Activated T-helper 1 cell treated with anti-CD3 and anti-CD28 coated beads, Interleukin-12 subunit alpha, Interleukin-12 subunit beta, Interleukin-2, Interleukin-4 antibody, amounts not matched to agents 30 ng/mL and 10 ng/mL and 1 ng/mL, durations not matched to agents 14 hours and 24 hours and 36 hours (primary cell): ENCODE measurements at regions of chr12 and their contacts with region 1.

Region 1: GRCh38 chr12:56117778-56118687 is at the start of gene ZC3H10:
- DNase-seq: peak; percentile 98
- H3K4me3 Mint-ChIP-seq: peak within 1 kb of the TSS; percentile 91
- H3K27ac Mint-ChIP-seq: peak within 1 kb of the TSS; percentile 99
- H3K4me1 Mint-ChIP-seq: peaks cover 31% of the 10 kb centered on the region
- H3K27me3 Mint-ChIP-seq: no peaks in the 10 kb centered on the region
- total RNA-seq, gene ZC3H10: 13.5 and 13.7 TPM in 2 replicates

Region 2: GRCh38 chr12:54984658-54985376 is 1133.2 kb before region 1 on chr12 and contains the start of gene TESPA1:
- intact Hi-C with region 1: loop called (anchors 5 kb)
- DNase-seq: peak; percentile 82
- H3K4me3 Mint-ChIP-seq: peak within 1 kb of the TSS; percentile 90
- H3K27ac Mint-ChIP-seq: peak within 1 kb of the TSS; percentile 90
- H3K4me1 Mint-ChIP-seq: peaks cover 79% of the 10 kb centered on the region
- H3K27me3 Mint-ChIP-seq: no peaks in the 10 kb centered on the region
- total RNA-seq, gene TESPA1: 179 and 181 TPM in 2 replicates

Region 3: DNA sequence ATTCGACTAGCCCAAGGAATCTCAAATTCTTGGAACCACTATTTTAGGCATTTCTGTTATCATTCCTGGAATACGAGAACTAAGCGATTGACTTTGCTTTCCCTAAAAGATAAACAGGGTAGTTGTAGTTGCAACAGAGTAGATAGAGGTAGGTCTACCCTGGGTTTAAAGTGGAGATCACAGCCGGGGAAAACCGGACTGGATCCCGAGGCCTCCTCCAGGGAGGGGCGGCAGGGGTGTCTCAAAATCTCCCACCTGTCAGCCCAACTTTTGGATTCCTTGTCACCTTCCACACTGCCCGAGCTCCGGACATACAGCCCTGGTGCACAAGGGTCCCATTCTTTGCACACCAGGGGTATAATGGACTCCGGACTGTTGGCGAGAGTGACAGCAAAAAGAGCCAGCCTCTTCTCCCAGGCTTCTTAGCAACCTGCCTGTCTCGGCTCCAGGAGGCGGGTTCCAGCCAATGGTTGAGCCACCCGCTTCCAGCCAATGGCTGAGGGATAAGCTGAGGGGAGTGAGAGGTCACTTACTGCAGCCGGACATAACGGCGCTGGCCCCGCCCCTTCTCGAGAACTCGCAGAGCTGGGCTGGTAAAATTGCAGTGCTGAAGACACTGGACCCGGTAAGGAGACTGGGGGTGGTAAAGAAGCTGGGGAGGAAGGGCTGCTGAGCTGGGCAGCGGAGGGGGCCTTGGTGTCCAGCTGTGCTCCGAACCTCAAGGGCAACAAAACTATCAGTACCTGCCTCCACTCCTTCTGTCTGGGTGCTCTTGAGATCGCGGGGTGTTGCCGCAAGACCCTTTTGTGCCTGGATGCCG is 121.1 kb before region 1 on chr12 and contains the start of gene SUOX:
- intact Hi-C with region 1: loop called (anchors 1 kb)
- DNase-seq: peak; percentile 50
- H3K4me3 Mint-ChIP-seq: peak within 1 kb of the TSS; percentile 88
- H3K27ac Mint-ChIP-seq: peak within 1 kb of the TSS; percentile 64
- H3K4me1 Mint-ChIP-seq: peaks cover 30% of the 10 kb centered on the region
- H3K27me3 Mint-ChIP-seq: no peaks in the 10 kb centered on the region
- total RNA-seq, gene SUOX: 12.0 and 12.9 TPM in 2 replicates

Region 4: DNA sequence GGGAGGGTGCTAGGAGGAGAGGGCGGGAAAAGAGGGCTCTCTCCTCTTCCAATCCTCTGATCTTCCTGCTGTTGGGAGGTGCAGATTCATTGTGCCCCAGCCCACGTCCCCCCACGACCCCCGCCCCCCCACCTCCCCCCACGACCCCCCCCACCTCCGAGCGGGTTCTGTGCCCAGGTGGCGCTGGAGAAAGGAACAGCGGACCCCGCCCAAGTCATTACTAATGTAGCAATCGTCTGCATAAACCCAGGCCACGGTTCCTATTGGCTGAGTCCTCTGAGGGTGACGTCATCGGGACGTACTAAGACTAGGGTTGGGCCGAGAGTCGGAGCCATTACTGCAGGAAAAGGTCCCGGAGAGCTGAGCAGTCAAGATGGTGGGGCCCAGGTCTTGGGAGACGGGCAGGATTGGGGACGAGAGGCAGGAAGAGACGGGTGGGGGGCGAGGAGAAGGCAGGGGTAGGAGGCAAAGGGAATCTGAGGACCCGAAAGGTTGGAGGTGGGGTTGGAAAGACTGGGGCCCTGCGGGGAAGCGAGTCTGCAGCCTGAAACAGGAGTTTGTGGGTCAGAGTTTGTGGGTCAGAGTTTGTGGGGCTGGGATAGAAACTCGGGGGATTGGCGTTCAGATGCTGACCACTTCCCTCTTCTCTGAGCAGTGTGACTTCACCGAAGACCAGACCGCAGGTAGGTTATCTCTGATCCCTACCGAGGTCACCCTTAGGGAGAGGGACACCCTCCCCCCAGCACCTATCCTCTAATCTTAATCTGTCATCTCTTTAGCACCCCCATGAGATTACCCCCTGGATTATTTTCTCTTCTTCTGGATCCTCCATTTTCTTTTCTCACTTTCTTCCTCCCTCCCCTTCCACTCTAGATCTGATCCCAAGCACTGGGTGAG is 40.2 kb after region 1 on chr12 and contains the start of gene MYL6:
- intact Hi-C with region 1: loop called (anchors 1 kb)
- DNase-seq: peak; percentile 90
- H3K4me3 Mint-ChIP-seq: peak within 1 kb of the TSS; percentile 97
- H3K27ac Mint-ChIP-seq: peak within 1 kb of the TSS; percentile 93
- H3K4me1 Mint-ChIP-seq: peaks cover 49% of the 10 kb centered on the region
- H3K27me3 Mint-ChIP-seq: no peaks in the 10 kb centered on the region
- total RNA-seq, gene MYL6: 786 and 802 TPM in 2 replicates

Region 5: GRCh38 chr12:56299853-56300643 is 182.0 kb after region 1 on chr12 and contains the start of gene CS:
- intact Hi-C with region 1: loop called (anchors 1 kb)
- DNase-seq: peak; percentile 98
- H3K4me3 Mint-ChIP-seq: peak within 1 kb of the TSS; percentile 98
- H3K27ac Mint-ChIP-seq: peak within 1 kb of the TSS; percentile 90
- H3K4me1 Mint-ChIP-seq: peaks cover 51% of the 10 kb centered on the region
- H3K27me3 Mint-ChIP-seq: no peaks in the 10 kb centered on the region
- total RNA-seq, gene CS: 269 and 280 TPM in 2 replicates

Region 6: GRCh38 chr12:56468216-56469006 is 350.4 kb after region 1 on chr12 and contains the start of gene SPRYD4:
- intact Hi-C with region 1: loop called (anchors 1 kb)
- DNase-seq: peak; percentile 94
- H3K4me3 Mint-ChIP-seq: peak within 1 kb of the TSS; percentile 99
- H3K27ac Mint-ChIP-seq: peak within 1 kb of the TSS; percentile 98
- H3K4me1 Mint-ChIP-seq: peaks cover 19% of the 10 kb centered on the region
- H3K27me3 Mint-ChIP-seq: no peaks in the 10 kb centered on the region
- total RNA-seq, gene SPRYD4: 5.0 and 5.5 TPM in 2 replicates

Region 7: GRCh38 chr12:57751788-57752667 is 1634.0 kb after region 1 on chr12 and contains the start of gene CDK4:
- intact Hi-C with region 1: loop called (anchors 2 kb)
- DNase-seq: peak; percentile 98
- H3K4me3 Mint-ChIP-seq: peak within 1 kb of the TSS; percentile 94
- H3K27ac Mint-ChIP-seq: peak within 1 kb of the TSS; percentile 95
- H3K4me1 Mint-ChIP-seq: peaks cover 67% of the 10 kb centered on the region
- H3K27me3 Mint-ChIP-seq: peaks cover 3% of the 10 kb centered on the region
- total RNA-seq, gene CDK4: 218 and 227 TPM in 2 replicates